ENCODE measurements at regions of chr7 and their contacts with region 1.

Region 1: GRCh38 chr7:10939911-10940703 is 33.6 kb upstream of the PHF14 start:
- DNase-seq: peak; percentile 89
- H3K4me3 ChIP-seq: peak overlapping the region; percentile 58 to 81 (median 70)
- H3K27ac ChIP-seq: peak overlapping the region; percentile 96
- H3K4me1 ChIP-seq: peaks cover 12% of the 10 kb centered on the region
- H3K27me3 ChIP-seq: no peaks in the 10 kb centered on the region
- CTCF ChIP-seq: no peak

Region 2: GRCh38 chr7:10973061-10973944 is 33.2 kb after region 1 on chr7 and contains the start of gene PHF14:
- CTCF ChIA-PET with region 1: interaction called, 9 read pairs
- dilution Hi-C with region 1: no loop called
- in situ Hi-C with region 1: no loop called
- intact Hi-C with region 1: loop called (anchors 1 kb)
- DNase-seq: peak; percentile 94
- H3K4me3 ChIP-seq: peak within 1 kb of the TSS; percentile 83 to 97 (median 89)
- H3K27ac ChIP-seq: peak within 1 kb of the TSS; percentile 77
- H3K4me1 ChIP-seq: peaks cover 6% of the 10 kb centered on the region
- H3K27me3 ChIP-seq: no peaks in the 10 kb centered on the region
- CTCF ChIP-seq: no peak
- total RNA-seq, gene PHF14: 30.5 to 31.0 TPM

Region 3: GRCh38 chr7:11212080-11212711 is 272.1 kb after region 1 on chr7:
- CTCF ChIA-PET with region 1: no interaction called
- dilution Hi-C with region 1: no loop called
- in situ Hi-C with region 1: no loop called
- intact Hi-C with region 1: loop called (anchors 1 kb)
- DNase-seq: peak; percentile 28
- H3K4me3 ChIP-seq: no peak overlapping the region
- H3K27ac ChIP-seq: no peak overlapping the region
- H3K4me1 ChIP-seq: no peaks in the 10 kb centered on the region
- H3K27me3 ChIP-seq: no peaks in the 10 kb centered on the region
- CTCF ChIP-seq: peak; percentile 76 to 82

Measured in mammary epithelial cell (primary cell).